Activated CD4-positive, alpha-beta memory T cell treated with anti-CD3 and anti-CD28 coated beads, Interleukin-2, amount 10 ng/mL, durations not matched to agents 7 days and 5 days (primary cell): ENCODE measurements at regions of chr1 and their contacts with region 1.

Region 1: GRCh38 chr1:225428068-225428880 is 436 bp upstream of the LBR start:
- DNase-seq: peak; percentile 95
- H3K4me3 Mint-ChIP-seq: peak overlapping the region; percentile 89
- H3K27ac Mint-ChIP-seq: peak overlapping the region; percentile 89
- H3K4me1 Mint-ChIP-seq: peaks cover 54% of the 10 kb centered on the region
- H3K27me3 Mint-ChIP-seq: peaks cover 2% of the 10 kb centered on the region

Region 2: DNA sequence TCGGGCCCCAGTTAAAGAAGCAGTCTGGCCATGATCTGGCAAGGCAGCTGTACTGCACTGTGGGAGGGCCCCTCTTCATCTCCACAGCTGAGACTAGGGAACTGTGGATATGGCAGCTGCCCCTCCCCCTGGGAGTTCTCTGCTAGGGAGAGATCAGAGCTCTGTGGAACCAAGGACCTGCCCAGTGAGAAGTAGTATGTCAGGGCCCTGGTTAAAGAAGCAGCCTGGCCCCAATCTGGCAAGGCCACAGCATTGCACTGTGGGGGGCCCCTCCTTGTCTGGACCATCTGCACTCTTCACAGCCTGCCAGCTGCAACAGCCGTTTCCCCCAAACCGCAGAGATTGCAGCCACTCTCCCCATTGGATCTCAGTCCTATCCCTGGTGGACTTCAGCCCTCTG is 290.3 kb before region 1 on chr1:
- CTCF ChIA-PET with region 1: no interaction called
- POLR2A ChIA-PET with region 1: no interaction called
- DNase-seq: no peak
- H3K4me3 Mint-ChIP-seq: no peak overlapping the region
- H3K27ac Mint-ChIP-seq: no peak overlapping the region
- H3K4me1 Mint-ChIP-seq: no peaks in the 10 kb centered on the region
- H3K27me3 Mint-ChIP-seq: no peaks in the 10 kb centered on the region

Region 3: GRCh38 chr1:225406976-225407725 is 21.1 kb before region 1 on chr1:
- CTCF ChIA-PET with region 1: no interaction called
- POLR2A ChIA-PET with region 1: interaction called, 13 read pairs
- DNase-seq: no peak
- H3K4me3 Mint-ChIP-seq: no peak overlapping the region
- H3K27ac Mint-ChIP-seq: peak overlapping the region; percentile 8
- H3K4me1 Mint-ChIP-seq: peaks cover 2% of the 10 kb centered on the region
- H3K27me3 Mint-ChIP-seq: no peaks in the 10 kb centered on the region

Region 4: DNA sequence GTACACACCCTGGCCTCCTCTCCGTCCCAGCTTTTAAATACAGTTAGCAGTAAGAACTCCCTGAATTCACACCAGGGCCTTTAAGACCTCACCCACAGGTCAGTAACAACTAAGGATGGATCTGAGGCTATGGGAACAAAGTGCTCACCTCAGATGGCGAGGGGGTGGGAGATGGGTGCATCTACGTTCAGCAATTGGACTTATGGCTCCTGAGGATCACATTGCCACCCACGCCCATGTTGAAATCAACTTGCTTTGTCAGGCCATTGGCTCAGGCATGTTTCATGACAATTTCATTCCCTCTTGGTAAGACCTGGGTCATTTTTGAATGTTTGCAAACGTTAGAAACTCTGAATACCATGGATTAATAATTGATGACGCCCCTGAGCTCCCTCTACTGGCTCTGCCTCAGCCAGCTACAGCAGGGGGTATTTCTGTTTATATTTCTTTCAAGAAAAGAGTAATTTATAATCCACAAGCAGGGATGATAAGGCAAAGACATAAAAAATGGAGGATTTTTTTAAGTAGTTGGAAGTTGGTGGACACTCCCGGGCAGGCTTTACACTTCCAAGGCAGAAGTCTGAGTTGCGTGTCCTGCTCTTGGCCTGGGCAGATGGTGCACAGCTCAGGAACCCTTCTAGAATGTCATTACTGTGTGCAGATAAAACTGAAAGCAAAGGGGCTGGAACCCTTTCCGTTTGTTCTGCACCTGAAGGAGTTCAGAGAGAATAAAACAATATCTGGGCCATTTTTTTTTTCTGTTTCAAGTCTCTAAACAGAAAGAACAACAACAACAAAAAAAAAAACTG is 13.2 kb after region 1 on chr1:
- CTCF ChIA-PET with region 1: interaction called, 92 read pairs
- POLR2A ChIA-PET with region 1: interaction called, 338 read pairs
- DNase-seq: no peak
- H3K4me3 Mint-ChIP-seq: peak overlapping the region; percentile 38
- H3K27ac Mint-ChIP-seq: peak overlapping the region; percentile 71
- H3K4me1 Mint-ChIP-seq: peaks cover 56% of the 10 kb centered on the region
- H3K27me3 Mint-ChIP-seq: no peaks in the 10 kb centered on the region

Region 5: DNA sequence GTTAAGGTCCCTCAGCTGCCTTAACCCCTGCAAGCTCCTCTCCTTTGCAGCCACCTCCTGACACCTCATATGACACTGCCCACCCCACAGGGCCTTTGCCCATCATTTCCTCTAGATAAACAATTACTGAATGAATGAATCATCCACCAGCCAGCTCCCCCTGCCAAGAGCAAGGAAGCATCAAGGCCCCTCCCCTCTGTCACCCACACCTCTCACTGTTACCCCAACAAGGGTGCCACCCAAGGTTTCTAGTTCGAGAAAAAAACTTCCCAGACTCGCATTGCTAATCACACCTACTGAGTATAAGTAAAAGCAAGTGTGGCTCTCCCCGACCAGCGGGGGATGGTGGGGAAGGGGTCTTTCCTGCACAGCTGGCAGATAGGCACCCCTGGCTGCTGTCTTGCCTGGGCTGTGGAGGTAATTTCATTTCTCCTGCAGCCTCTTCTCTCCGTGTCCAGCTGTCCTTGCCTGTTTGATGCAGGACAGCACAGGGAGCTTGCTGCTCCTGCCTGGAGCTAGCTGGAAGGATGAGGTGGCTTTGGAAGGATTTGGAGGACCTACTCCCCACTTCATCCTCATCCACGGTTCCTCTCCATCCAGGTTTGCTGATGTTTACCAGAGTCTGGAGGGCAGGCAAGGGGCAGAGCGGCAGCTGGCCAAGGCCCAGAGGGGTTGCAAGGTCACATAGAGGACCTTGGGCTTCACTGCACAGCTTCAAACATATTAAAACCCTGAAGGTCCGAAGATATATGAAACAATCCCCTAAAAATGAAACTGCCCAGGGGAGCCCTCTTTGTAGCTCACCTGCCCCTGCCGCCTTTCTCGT is 32.7 kb after region 1 on chr1:
- CTCF ChIA-PET with region 1: interaction called, 14 read pairs
- POLR2A ChIA-PET with region 1: interaction called, 70 read pairs
- DNase-seq: peak; percentile 69
- H3K4me3 Mint-ChIP-seq: no peak overlapping the region
- H3K27ac Mint-ChIP-seq: peak overlapping the region; percentile 77
- H3K4me1 Mint-ChIP-seq: peaks cover 70% of the 10 kb centered on the region
- H3K27me3 Mint-ChIP-seq: no peaks in the 10 kb centered on the region

Region 6: GRCh38 chr1:225474986-225475820 is 46.9 kb after region 1 on chr1:
- CTCF ChIA-PET with region 1: interaction called, 36 read pairs
- POLR2A ChIA-PET with region 1: interaction called, 290 read pairs
- DNase-seq: peak; percentile 77
- H3K4me3 Mint-ChIP-seq: no peak overlapping the region
- H3K27ac Mint-ChIP-seq: no peak overlapping the region
- H3K4me1 Mint-ChIP-seq: peaks cover 45% of the 10 kb centered on the region
- H3K27me3 Mint-ChIP-seq: peaks cover 2% of the 10 kb centered on the region